ENCODE measurements at regions of chr2 and their contacts with region 1.

Region 1: DNA sequence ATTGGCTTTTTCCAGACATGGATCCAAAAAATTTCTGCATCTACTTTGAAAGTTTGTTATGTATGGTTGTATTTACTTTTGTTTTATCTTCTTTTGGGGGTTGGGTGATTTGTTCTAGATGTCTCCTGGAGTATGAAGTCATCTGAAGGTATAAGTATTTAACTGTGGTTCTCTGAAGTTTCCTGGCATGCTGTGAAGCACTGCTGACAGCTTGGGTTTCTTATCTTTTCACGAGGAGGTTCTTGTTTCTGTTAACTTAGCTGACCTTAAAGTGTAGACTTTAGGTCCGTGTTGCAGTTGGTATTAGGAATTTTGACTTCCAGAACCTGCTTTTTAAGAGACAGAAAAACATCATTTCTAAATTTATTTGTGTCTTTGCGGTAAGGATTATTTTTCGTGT is 15.9 kb downstream of the GLS start:
- DNase-seq: no peak
- H3K4me3 ChIP-seq: peak overlapping the region in 1 of 2 donors; percentile 5
- H3K27ac ChIP-seq: peak overlapping the region in 1 of 2 donors; percentile 25
- H3K4me1 ChIP-seq: peaks cover 0 to 30% of the 10 kb centered on the region in 2 donors
- H3K27me3 ChIP-seq: no peaks in the 10 kb centered on the region
- CTCF ChIP-seq: no peak

Region 2: GRCh38 chr2:190929919-190930318 is 33.4 kb after region 1 on chr2:
- intact Hi-C with region 1: loop called (anchors 5 kb)
- DNase-seq: no peak
- H3K4me3 ChIP-seq: no peak overlapping the region
- H3K27ac ChIP-seq: no peak overlapping the region
- H3K4me1 ChIP-seq: no peaks in the 10 kb centered on the region
- H3K27me3 ChIP-seq: no peaks in the 10 kb centered on the region
- CTCF ChIP-seq: no peak

Region 3: DNA sequence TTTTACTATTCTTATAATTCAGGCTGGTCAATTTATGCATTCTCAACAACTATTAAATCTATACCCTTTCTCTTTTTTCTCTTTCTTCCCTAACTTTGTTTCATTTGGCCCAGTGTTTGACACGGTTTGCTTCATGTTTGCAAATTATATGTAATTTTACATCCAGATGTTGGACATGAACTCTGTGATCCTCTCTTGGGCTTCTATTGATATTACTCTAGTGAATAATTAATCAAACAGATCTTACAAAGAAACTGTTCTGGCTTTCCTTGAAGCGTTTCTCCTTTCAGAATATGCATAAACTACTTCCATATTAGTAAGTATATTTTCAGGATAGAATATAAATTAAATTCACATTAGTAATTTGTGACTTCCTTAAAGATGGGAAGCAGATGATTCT is 1523.3 kb after region 1 on chr2:
- intact Hi-C with region 1: no loop called
- DNase-seq: no peak
- H3K4me3 ChIP-seq: no peak overlapping the region
- H3K27ac ChIP-seq: no peak overlapping the region
- H3K4me1 ChIP-seq: no peaks in the 10 kb centered on the region
- H3K27me3 ChIP-seq: no peaks in the 10 kb centered on the region
- CTCF ChIP-seq: no peak